ENCODE measurements at regions of chr7 and their contacts with region 1.

Region 1: GRCh38 chr7:147161405-147161804 is 1044.8 kb downstream of the CNTNAP2 start:
- DNase-seq: no peak

Region 2: DNA sequence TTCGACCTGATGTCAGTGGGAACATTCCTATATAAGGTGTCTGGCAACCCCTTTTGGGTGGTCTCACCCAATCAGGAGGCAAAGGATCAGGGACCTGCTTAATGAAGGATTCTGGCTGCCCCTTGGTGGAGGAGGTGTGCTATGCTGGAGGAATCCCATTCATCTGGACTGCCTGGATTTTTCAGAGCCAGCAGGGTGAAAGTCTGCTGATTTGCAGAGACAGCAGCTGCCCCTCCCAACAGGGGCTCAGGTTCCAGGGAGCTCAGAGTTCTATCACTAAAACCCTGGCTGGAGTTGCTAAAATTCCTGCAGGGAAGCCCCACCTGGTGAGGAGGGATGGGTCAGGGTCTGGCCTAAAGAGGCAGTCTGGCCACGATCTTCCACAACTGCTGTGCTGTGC is 1443.3 kb before region 1 on chr7:
- intact Hi-C with region 1: no loop called
- DNase-seq: no peak

Region 3: GRCh38 chr7:147145194-147145593 is 16.2 kb before region 1 on chr7:
- intact Hi-C with region 1: loop called in 1 of 2 experiments (anchors 1 kb)
- DNase-seq: no peak

Region 4: DNA sequence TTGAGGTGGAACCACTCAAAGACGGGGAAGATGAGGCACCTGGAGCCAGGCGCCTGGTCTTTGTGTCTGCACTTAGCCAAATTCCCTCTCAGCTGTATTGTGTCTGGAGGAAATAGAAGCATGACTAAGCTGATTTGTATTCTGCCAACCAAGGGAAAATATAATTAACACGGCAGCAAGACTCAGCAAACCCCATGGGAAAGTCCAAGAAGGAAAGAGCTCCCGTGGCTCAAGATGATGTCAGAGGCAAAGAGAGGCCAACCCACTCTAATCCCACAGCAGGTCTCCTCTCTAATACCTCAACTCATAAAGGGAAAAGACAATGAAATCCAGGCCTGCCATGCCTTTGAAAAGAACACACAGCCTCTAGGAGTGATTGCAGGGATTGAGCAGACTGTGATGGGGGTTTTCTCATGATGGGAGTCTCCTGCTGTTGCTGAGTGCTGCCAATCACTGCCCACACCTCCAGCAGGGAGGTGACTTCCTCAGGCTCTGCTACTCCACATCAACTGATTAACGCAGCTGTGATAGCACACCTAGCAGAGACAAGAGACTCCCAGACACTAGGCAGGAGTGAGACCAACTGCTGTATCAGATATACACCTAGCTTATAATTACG is 1173.7 kb after region 1 on chr7:
- intact Hi-C with region 1: no loop called
- DNase-seq: no peak